SK-N-SH (cell line): ENCODE measurements at regions of chr12 and their contacts with region 1.

Region 1: GRCh38 chr12:121351820-121352681 is at the start of gene ANAPC5:
- DNase-seq: peak; percentile 92
- H3K4me3 ChIP-seq: peak within 1 kb of the TSS; percentile 75 to 84
- H3K27ac ChIP-seq: peak within 1 kb of the TSS; percentile 84 to 86
- H3K4me1 ChIP-seq: no peaks in the 10 kb centered on the region; a peak in 1 of 4 replicates
- H3K27me3 ChIP-seq: no peaks in the 10 kb centered on the region
- CTCF ChIP-seq: no peak
- EP300 ChIP-seq: peak; percentile 6 to 9; a peak in 1 of 4 replicates
- RAD21 ChIP-seq: no peak
- polyA plus RNA-seq, gene ANAPC5: 110 and 158 TPM in 2 replicates

Region 2: GRCh38 chr12:121399391-121400331 is 47.6 kb after region 1 on chr12 and contains the start of gene RNF34:
- CTCF ChIA-PET with region 1: no interaction called
- POLR2A ChIA-PET with region 1: interaction called, 20 read pairs
- DNase-seq: peak; percentile 96
- H3K4me3 ChIP-seq: peak within 1 kb of the TSS; percentile 77 to 81
- H3K27ac ChIP-seq: peak within 1 kb of the TSS; percentile 73 to 84
- H3K4me1 ChIP-seq: peaks cover 4 to 8% of the 10 kb centered on the region in 2 experiments; a peak in 3 of 4 replicates
- H3K27me3 ChIP-seq: no peaks in the 10 kb centered on the region
- CTCF ChIP-seq: no peak
- EP300 ChIP-seq: no peak
- RAD21 ChIP-seq: peak; percentile 1; the same call in 1 of the 2 replicates
- polyA plus RNA-seq, gene RNF34: 28.7 and 29.4 TPM in 2 replicates